ENCODE measurements at regions of chr22 and their contacts with region 1.

Region 1: GRCh38 chr22:25172153-25172552 is 27.5 kb upstream of the CRYBB3 start:
- DNase-seq: no peak
- ATAC-seq: peak; percentile 77

Region 2: DNA sequence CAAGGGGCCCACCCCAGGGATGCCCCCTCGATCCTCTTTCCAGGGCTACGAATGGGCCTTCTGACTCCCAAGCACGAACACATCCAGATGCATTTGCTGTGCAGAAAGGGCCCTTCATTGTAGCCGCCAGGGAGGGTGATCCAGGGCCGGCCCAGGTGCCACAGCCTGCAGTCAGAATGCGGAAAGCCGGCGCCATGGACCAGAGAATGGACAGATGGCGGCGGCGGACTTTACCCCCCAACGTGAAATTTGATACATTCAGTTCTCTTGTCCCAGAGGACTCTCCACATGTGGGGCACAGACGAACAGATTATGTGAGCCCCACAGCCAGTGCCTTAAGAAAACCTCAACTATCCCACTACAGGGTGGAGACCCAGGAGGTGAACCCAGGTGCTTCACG is 132.4 kb before region 1 on chr22:
- intact Hi-C with region 1: no loop called
- DNase-seq: no peak
- ATAC-seq: no peak

Region 3: GRCh38 chr22:25110846-25111578 is 61.1 kb before region 1 on chr22:
- intact Hi-C with region 1: loop called (anchors 5 kb)
- DNase-seq: peak; percentile 48
- ATAC-seq: peak; percentile 91

Measured in left ventricle myocardium superior (tissue), 1 donor.